ENCODE measurements at regions of chr11 and their contacts with region 1.

Region 1: GRCh38 chr11:19903620-19904069 is 191.0 kb downstream of the NAV2 start:
- DNase-seq: peak; percentile 50 to 90 (median 77)
- H3K4me3 ChIP-seq: no peak overlapping the region
- H3K27ac ChIP-seq: peak overlapping the region in 4 of 59 donors; percentile 14 to 63 (median 24)
- H3K27me3 ChIP-seq: no peaks in the 10 kb centered on the region
- CTCF ChIP-seq: peak; percentile 62 to 96 (median 88)

Region 2: GRCh38 chr11:19561011-19561410 is 342.6 kb before region 1 on chr11:
- intact Hi-C with region 1: loop called (anchors 1 kb)
- DNase-seq: no peak
- H3K4me3 ChIP-seq: no peak overlapping the region
- H3K27ac ChIP-seq: no peak overlapping the region
- H3K27me3 ChIP-seq: no peaks in the 10 kb centered on the region
- CTCF ChIP-seq: no peak

Region 3: DNA sequence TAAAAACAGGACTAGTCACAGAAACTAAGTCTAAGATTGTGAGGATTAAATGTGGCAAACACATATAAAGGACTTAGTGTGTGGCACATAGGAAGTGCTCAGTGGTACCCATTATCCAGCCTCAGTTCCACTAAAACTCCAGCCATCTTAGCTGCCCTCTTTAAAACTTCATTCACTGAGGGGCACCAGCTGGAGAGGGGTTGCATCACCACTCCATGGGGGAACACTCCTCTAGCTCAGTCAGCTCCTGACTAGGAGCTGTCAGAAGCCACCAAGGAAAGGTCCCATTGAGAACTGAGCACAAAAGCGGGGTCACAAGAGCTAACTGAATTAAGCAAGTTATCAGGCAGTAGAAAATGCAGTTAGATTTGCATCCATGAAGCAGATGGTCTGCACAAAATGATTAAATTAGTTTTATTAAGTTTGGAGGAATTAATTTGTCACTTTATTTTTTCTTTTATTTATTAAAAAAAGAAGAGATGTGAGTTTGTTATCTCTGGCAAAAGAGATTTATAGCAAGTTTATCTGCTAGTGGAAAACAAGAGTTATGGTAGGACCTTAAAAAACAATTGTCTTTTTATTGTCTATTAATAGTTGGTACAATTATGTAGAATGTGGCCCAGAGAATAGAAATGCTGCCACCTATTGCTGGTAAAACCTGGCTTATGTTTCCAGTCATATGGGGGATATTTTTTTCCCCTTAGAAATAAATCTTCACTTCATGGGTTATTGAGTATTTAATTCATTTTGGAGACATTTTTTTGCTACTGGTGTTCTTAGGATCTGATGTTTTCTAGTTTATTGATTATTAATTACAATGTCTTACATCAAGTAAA is 95.4 kb before region 1 on chr11:
- intact Hi-C with region 1: loop called in 1 of 2 experiments (anchors 2 kb)
- DNase-seq: no peak
- H3K4me3 ChIP-seq: no peak overlapping the region
- H3K27ac ChIP-seq: peak overlapping the region in 20 of 59 donors; percentile 6 to 68 (median 33)
- H3K27me3 ChIP-seq: no peaks in the 10 kb centered on the region
- CTCF ChIP-seq: peak in 53 of 56 donors; percentile 15 to 75 (median 44)

Region 4: GRCh38 chr11:19844806-19845205 is 58.8 kb before region 1 on chr11:
- intact Hi-C with region 1: loop called in 1 of 2 experiments (anchors 2 kb)
- DNase-seq: no peak
- H3K4me3 ChIP-seq: peak overlapping the region in 1 of 59 donors; percentile 26
- H3K27ac ChIP-seq: peak overlapping the region in 32 of 59 donors; percentile 0 to 73 (median 39)
- H3K27me3 ChIP-seq: no peaks in the 10 kb centered on the region
- CTCF ChIP-seq: peak in 6 of 56 donors; percentile 9 to 49 (median 12)

Region 5: GRCh38 chr11:20110908-20111669 is 207.4 kb after region 1 on chr11:
- intact Hi-C with region 1: loop called in 1 of 2 experiments (anchors 5 kb)
- DNase-seq: peak in 3 of 10 donors; percentile 35 to 47 (median 44)
- H3K4me3 ChIP-seq: no peak overlapping the region
- H3K27ac ChIP-seq: peak overlapping the region in 43 of 59 donors; percentile 1 to 87 (median 76)
- H3K27me3 ChIP-seq: no peaks in the 10 kb centered on the region
- CTCF ChIP-seq: peak; percentile 60 to 88 (median 82)